Stomach (tissue), 19 donors: ENCODE measurements at regions of chr7 and their contacts with region 1.

Region 1: GRCh38 chr7:26052721-26053120 is 99.3 kb upstream of the NFE2L3 start:
- DNase-seq: no peak
- H3K4me3 ChIP-seq: no peak overlapping the region
- H3K27ac ChIP-seq: no peak overlapping the region
- H3K4me1 ChIP-seq: no peaks in the 10 kb centered on the region
- H3K27me3 ChIP-seq: no peaks in the 10 kb centered on the region
- CTCF ChIP-seq: no peak
- EP300 ChIP-seq: no peak
- POLR2A ChIP-seq: no peak

Region 2: DNA sequence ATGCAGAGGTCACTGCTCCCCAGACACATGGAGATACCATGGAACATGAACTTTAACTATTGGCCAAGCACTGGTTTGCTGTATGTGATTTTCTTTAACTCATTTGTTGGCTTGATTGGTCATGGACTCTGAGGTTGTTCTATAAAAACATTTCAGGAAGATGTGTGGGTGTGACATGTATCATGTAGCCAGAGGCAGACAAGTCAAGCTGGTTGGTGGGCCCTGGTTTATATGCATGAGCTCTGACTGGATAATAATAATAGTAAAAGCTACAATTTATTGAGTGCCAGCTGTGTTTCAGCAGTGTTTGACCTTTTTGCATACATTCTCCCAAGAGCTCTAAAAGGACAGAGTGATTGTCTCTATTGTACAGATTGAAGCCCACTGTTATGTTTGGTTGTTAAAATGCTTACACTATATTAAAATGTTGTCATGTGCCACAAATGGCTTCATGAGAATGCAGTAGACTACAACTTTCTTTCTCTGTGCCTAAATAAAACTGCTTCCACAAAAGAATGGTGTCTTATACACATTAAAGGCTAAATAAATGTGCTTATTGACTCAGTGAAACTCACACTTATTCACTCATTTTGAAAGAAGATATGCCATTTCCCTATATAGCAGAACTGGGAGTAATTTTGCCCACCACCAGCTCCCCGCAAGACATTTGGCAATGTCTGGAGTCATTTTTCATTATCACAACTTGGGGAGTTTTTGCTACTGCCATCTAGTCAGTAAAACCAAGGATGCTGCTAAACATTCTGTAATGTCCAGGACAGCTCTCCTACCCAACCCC is 144.4 kb before region 1 on chr7:
- intact Hi-C with region 1: loop called (anchors 10 kb)
- DNase-seq: no peak
- H3K4me3 ChIP-seq: no peak overlapping the region
- H3K27ac ChIP-seq: no peak overlapping the region
- H3K4me1 ChIP-seq: peaks cover 0 to 19% (median 8%) of the 10 kb centered on the region in 4 donors
- H3K27me3 ChIP-seq: peaks cover 0 to 9% (median 0%) of the 10 kb centered on the region in 3 donors
- CTCF ChIP-seq: no peak
- EP300 ChIP-seq: no peak
- POLR2A ChIP-seq: no peak

Region 3: GRCh38 chr7:26117142-26117807 is 64.6 kb after region 1 on chr7:
- intact Hi-C with region 1: no loop called
- DNase-seq: no peak
- H3K4me3 ChIP-seq: no peak overlapping the region
- H3K27ac ChIP-seq: no peak overlapping the region
- H3K4me1 ChIP-seq: no peaks in the 10 kb centered on the region
- H3K27me3 ChIP-seq: peaks cover 0 to 18% (median 0%) of the 10 kb centered on the region in 3 donors
- CTCF ChIP-seq: no peak
- EP300 ChIP-seq: no peak
- POLR2A ChIP-seq: no peak